GM12878 (cell line): ENCODE measurements at regions of chr22 and their contacts with region 1.

Region 1: GRCh38 chr22:21952586-21953571 is at the start of gene PPM1F:
- DNase-seq: peak; percentile 8
- ATAC-seq: peak; percentile 90
- H3K4me3 ChIP-seq: peak within 1 kb of the TSS; percentile 81
- H3K27ac ChIP-seq: no peak within 1 kb of the TSS; the same call in 1 of the 2 replicates
- H3K4me1 ChIP-seq: no peaks in the 10 kb centered on the region; the same call in 1 of the 2 replicates
- H3K27me3 ChIP-seq: no peaks in the 10 kb centered on the region
- CTCF ChIP-seq: peak; percentile 78 to 92 (median 87); a peak in 5 of 6 replicates
- EP300 ChIP-seq: no peak
- POLR2A ChIP-seq: peak; percentile 67
- RAD21 ChIP-seq: peak; percentile 75
- polyA plus RNA-seq, gene PPM1F: 0.55 to 2.0 TPM

Region 2: GRCh38 chr22:21712894-21713712 is 239.8 kb before region 1 on chr22:
- CTCF ChIA-PET with region 1: interaction called, 3 read pairs
- POLR2A ChIA-PET with region 1: no interaction called
- RAD21 ChIA-PET with region 1: interaction called, 11 read pairs
- SMC1A ChIA-PET with region 1: interaction called, 12 read pairs
- in situ Hi-C with region 1: loop called (anchors 5 kb)
- intact Hi-C with region 1: no loop called
- DNase-seq: peak; percentile 25
- ATAC-seq: peak; percentile 97
- H3K4me3 ChIP-seq: no peak overlapping the region
- H3K27ac ChIP-seq: no peak overlapping the region
- H3K4me1 ChIP-seq: no peaks in the 10 kb centered on the region
- H3K27me3 ChIP-seq: no peaks in the 10 kb centered on the region
- CTCF ChIP-seq: peak; percentile 79 to 91 (median 84)
- EP300 ChIP-seq: no peak
- POLR2A ChIP-seq: no peak
- RAD21 ChIP-seq: peak; percentile 93

Region 3: DNA sequence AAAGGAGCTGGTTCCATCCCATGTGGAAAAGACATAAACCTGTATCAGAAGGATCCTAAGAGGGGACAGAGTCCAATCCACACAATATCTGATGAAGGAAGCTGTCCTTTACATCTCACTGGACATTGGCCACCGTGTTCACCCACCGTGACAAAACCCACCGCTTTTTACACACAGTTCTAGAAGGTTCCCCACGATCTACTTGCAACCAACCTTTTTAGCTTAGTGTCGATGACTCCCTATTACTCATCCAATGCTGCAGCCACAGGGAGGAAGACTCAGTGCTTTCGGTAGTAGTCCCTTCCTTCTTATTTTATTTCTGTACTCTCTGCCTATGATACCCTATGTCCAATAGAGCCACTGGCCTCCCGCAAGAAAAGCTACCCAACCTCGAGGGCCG is 150.8 kb before region 1 on chr22:
- CTCF ChIA-PET with region 1: interaction called, 3 read pairs
- POLR2A ChIA-PET with region 1: no interaction called
- RAD21 ChIA-PET with region 1: no interaction called
- SMC1A ChIA-PET with region 1: no interaction called
- in situ Hi-C with region 1: no loop called
- intact Hi-C with region 1: loop called (anchors 5 kb)
- DNase-seq: no peak
- ATAC-seq: no peak
- H3K4me3 ChIP-seq: no peak overlapping the region
- H3K27ac ChIP-seq: no peak overlapping the region
- H3K4me1 ChIP-seq: no peaks in the 10 kb centered on the region
- H3K27me3 ChIP-seq: no peaks in the 10 kb centered on the region
- CTCF ChIP-seq: no peak
- EP300 ChIP-seq: no peak
- POLR2A ChIP-seq: no peak
- RAD21 ChIP-seq: no peak

Region 4: DNA sequence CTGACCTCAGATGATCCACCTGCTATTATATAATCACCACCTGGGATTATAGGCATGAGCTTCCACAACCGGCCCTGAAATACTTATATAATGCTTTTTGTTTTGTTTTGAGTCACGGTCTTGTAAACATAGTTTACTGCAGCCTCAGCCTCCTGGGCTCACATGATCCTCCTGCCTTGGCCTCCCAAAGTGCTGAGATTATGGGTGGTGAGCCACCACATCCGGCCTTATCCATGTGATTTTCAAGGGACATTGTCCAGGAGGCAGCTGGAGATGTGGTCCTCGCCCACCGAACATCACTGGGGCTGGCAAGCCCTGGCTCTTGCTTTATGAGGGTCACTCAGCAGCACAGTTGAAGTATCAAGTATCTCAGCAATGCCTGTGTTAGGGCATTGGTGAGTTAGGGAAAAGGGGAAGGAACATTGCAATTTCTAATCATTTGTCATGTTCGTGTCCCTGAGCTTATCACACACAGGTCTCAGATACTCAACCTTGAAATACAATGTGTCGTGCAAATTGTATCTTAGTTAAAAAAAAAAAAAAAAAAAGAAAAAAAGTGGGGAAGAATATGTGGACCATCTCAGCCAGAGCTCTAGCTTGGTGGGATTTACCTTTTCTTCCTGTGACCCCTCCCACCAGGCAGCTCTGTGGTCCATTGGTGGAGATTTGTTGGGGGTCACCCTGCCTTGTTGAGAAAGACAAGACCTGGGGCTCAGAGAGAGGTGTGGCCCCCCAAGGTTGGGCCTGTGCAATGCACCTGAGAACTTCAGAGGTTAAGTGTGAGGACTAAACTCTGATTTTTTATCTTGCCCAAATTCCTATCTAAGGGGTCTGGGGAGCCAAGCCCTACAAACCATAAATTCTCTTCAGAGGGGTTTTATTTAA is 45.0 kb before region 1 on chr22:
- CTCF ChIA-PET with region 1: no interaction called
- POLR2A ChIA-PET with region 1: no interaction called
- RAD21 ChIA-PET with region 1: no interaction called
- SMC1A ChIA-PET with region 1: no interaction called
- in situ Hi-C with region 1: no loop called
- intact Hi-C with region 1: no loop called
- DNase-seq: no peak
- ATAC-seq: no peak
- H3K4me3 ChIP-seq: no peak overlapping the region
- H3K27ac ChIP-seq: no peak overlapping the region
- H3K4me1 ChIP-seq: no peaks in the 10 kb centered on the region
- H3K27me3 ChIP-seq: no peaks in the 10 kb centered on the region; a peak in 1 of 4 replicates
- CTCF ChIP-seq: no peak
- EP300 ChIP-seq: no peak
- POLR2A ChIP-seq: no peak
- RAD21 ChIP-seq: no peak

Region 5: DNA sequence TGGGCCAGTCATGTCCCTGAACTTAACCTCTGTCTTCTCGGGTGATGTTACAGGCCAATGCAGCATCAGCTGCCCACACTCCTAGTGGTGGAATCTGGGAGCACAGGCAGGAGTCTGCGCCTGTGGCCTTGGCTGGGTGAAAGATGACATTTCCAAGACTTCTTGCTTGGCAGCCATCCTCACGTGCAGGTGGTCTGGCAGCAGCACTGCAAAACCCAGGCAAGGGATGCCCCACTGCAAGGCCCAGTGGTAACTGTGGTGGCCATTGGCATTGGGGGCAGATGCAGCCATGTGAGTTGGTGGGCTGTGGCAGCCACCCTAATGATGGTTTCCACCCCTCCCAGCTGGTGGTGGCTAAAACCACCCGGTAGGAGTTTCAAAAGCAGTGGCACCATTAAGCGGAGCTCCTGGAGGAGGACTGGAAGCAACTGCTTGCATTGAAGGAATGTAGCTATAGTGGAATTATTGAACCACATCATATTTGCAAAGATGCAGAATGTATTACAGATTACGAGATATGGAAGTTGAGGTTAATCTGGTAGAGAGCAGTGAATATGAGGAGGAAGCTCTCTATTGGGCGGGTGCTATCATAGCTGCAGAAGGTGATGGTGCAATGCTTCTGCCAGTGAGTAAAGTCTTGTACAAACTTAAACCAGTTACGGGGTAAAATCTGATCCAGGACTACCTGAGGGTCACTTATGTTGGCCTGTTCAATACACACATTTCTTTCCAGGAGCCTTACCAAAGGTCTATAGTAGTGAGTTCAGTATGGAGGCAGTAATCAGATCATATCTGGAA is 150.4 kb after region 1 on chr22:
- CTCF ChIA-PET with region 1: no interaction called
- POLR2A ChIA-PET with region 1: no interaction called
- RAD21 ChIA-PET with region 1: no interaction called
- SMC1A ChIA-PET with region 1: no interaction called
- in situ Hi-C with region 1: no loop called
- intact Hi-C with region 1: no loop called
- DNase-seq: no peak
- ATAC-seq: 0 out of 3 replicates have a peak, but pooled peaks have one; percentile 18
- H3K4me3 ChIP-seq: no peak overlapping the region
- H3K27ac ChIP-seq: no peak overlapping the region
- H3K4me1 ChIP-seq: peaks cover 9% of the 10 kb centered on the region
- H3K27me3 ChIP-seq: no peaks in the 10 kb centered on the region
- CTCF ChIP-seq: peak; percentile 17 to 60 (median 30); a peak in 5 of 6 replicates
- EP300 ChIP-seq: no peak
- POLR2A ChIP-seq: no peak
- RAD21 ChIP-seq: no peak